AG04450 (cell line): ENCODE measurements at regions of chr7 and their contacts with region 1.

Region 1: GRCh38 chr7:43260980-43261878 is 148.8 kb downstream of the HECW1 start:
- DNase-seq: peak; percentile 72
- H3K4me3 ChIP-seq: no peak overlapping the region
- H3K27ac ChIP-seq: no peak overlapping the region
- H3K27me3 ChIP-seq: no peaks in the 10 kb centered on the region
- CTCF ChIP-seq: peak; percentile 96

Region 2: DNA sequence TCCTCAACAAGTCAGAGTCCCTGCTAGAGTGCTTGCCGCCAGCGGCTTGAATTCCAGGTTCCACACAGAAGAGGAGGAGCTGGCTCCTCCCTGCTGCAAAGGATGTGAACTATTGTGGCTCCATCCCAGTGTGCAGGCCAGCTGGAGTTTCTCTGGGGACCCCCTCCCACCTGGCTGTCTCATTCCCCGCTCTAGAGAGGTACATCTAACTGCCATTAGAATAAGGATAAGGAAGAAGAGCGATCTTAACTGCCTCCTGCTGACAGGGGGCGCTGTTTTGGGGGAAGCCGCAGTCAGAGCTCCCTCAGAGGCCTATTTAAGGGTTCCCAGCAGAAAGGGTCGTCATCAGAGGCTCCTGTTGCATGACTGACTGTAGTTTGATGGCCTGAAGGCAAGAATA is 189.6 kb before region 1 on chr7:
- CTCF ChIA-PET with region 1: interaction called, 14 read pairs
- POLR2A ChIA-PET with region 1: no interaction called
- DNase-seq: no peak
- H3K4me3 ChIP-seq: no peak overlapping the region
- H3K27ac ChIP-seq: no peak overlapping the region
- H3K27me3 ChIP-seq: peaks cover 4% of the 10 kb centered on the region
- CTCF ChIP-seq: peak; percentile 41

Region 3: GRCh38 chr7:43204081-43204480 is 57.1 kb before region 1 on chr7:
- CTCF ChIA-PET with region 1: interaction called, 10 read pairs
- POLR2A ChIA-PET with region 1: no interaction called
- DNase-seq: peak; percentile 21
- H3K4me3 ChIP-seq: no peak overlapping the region
- H3K27ac ChIP-seq: no peak overlapping the region
- H3K27me3 ChIP-seq: no peaks in the 10 kb centered on the region
- CTCF ChIP-seq: no peak

Region 4: DNA sequence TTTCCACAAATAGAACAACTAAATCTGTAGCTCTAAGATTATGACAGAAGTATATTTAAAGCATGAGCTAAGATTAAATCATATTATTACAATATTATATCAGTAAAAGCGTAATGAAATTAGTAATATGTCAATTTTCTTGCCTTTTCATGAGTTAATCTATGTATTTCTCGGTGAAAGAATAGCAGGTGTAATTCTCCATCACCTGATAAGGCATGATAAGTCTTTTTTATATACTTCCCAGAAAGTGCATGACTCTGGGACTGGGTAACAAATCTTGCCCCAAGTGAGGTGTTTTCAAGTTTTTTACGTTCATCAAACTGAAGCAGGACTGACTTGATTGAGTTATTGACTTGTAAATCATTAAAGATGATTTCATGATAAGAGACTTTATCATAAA is 48.3 kb before region 1 on chr7:
- CTCF ChIA-PET with region 1: interaction called, 10 read pairs
- POLR2A ChIA-PET with region 1: no interaction called
- DNase-seq: no peak
- H3K4me3 ChIP-seq: no peak overlapping the region
- H3K27ac ChIP-seq: no peak overlapping the region
- H3K27me3 ChIP-seq: no peaks in the 10 kb centered on the region
- CTCF ChIP-seq: no peak

Region 5: DNA sequence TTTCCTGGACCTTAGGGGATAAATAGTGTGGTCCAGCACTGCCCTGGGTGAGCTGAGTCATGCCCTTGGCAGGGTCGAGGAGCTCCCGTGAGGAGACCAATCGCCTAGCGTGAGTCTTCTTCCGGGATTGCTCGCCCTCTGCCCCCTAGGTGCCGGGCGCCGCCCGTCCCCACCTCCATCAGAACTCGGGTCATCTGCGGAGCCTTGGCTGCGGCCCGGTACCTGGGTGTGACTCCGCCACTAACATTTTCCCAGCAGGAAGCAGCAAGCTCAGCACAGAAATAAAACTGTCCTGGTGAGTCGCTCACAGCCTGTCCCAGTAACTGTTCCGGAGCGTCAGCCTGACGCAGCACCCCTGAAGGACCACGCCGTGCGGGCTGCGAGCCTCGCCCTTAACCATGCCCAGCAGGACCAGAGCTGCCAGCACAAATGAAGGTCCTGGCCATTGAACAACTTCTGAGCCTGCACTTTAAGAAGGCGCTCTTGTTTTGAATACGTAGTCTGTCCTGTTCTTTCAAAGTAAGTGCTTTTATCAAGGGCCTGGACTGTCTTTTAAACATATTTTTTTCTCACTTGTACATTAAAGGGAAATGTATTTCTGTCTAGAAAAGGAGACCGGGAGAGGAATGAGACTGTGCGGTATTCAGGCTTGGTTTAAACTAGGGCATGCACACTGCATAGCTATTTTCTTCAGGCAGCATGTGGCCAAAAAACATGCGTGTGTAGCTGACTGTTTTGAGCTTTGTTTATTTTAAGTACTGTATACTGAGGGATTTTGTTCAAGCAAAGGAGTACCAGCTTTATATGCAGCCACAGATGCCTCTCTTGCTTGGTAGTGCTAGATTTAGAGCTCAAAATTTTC is 12.0 kb before region 1 on chr7:
- CTCF ChIA-PET with region 1: interaction called, 61 read pairs
- POLR2A ChIA-PET with region 1: interaction called, 4 read pairs
- DNase-seq: peak; percentile 70
- H3K4me3 ChIP-seq: peak overlapping the region; percentile 55
- H3K27ac ChIP-seq: peak overlapping the region; percentile 97
- H3K27me3 ChIP-seq: no peaks in the 10 kb centered on the region
- CTCF ChIP-seq: no peak

Region 6: DNA sequence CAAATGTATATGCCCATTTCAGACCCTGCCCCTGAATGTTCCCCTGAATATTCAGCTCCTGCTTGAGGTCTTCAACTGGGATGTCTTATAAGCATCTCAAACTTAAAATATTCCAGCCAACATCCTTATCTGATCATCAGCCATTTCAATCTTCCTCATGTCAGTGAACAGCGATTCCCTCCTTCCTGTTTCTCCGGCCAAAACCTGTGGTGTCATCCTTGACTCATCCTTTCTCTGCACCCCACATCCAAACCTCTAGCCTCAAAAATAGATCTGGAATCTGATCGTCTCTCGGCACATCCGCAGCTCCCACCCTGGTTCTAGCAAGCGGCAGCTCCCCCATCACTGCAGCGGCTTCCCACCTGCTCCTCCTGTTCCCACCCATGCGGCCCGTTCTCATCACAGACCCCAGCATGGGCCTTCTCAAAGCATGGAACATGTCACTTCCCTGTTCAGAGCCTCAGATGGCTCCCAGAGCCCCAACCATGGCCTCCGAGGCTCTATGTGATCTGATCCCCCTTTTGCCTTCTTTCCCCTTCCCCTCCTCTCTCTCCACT is 16.9 kb after region 1 on chr7:
- CTCF ChIA-PET with region 1: interaction called, 14 read pairs
- POLR2A ChIA-PET with region 1: no interaction called
- DNase-seq: no peak
- H3K4me3 ChIP-seq: no peak overlapping the region
- H3K27ac ChIP-seq: no peak overlapping the region
- H3K27me3 ChIP-seq: peaks cover 4% of the 10 kb centered on the region
- CTCF ChIP-seq: no peak